ENCODE measurements at regions of chr17 and their contacts with region 1.

Region 1: GRCh38 chr17:72725433-72726068 is 366.9 kb downstream of the SLC39A11 start:
- DNase-seq: no peak
- ATAC-seq: peak in 1 of 2 donors; percentile 30
- H3K4me3 ChIP-seq: no peak overlapping the region
- H3K27ac ChIP-seq: no peak overlapping the region
- H3K4me1 ChIP-seq: no peaks in the 10 kb centered on the region
- H3K27me3 ChIP-seq: no peaks in the 10 kb centered on the region
- CTCF ChIP-seq: peak; percentile 33 to 71 (median 55)
- POLR2A ChIP-seq: no peak

Region 2: GRCh38 chr17:73030501-73030921 is 305.0 kb after region 1 on chr17:
- in situ Hi-C with region 1: no loop called
- intact Hi-C with region 1: no loop called
- DNase-seq: peak; percentile 16 to 22
- ATAC-seq: peak; percentile 49 to 70
- H3K4me3 ChIP-seq: no peak overlapping the region
- H3K27ac ChIP-seq: no peak overlapping the region
- H3K4me1 ChIP-seq: peaks cover 12 to 16% of the 10 kb centered on the region in 2 donors
- H3K27me3 ChIP-seq: no peaks in the 10 kb centered on the region
- CTCF ChIP-seq: no peak
- POLR2A ChIP-seq: no peak

Region 3: DNA sequence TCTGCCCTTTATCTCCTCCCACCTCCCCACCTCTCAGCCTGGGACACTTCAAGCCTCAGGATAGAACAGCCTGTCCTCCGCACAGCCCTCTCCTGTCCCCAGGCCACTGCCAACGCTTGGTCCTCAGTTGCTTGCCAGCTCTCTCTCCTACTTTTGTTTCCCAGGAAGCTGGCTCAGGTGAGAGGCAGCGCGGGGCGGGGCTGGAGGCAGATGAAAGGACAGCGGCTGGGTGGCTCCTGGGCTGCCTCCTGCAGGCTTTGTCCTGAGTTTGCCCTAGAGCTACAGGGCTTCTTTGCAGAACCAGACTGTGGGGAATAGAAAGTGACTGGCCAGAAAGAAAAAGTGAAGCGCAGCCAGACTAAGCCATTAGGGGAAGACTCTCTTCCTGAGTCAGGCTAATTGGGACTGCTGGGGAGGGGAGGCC is 634.4 kb after region 1 on chr17:
- in situ Hi-C with region 1: loop called in 3 of 4 experiments (anchors 25 kb)
- intact Hi-C with region 1: no loop called
- DNase-seq: peak; percentile 81 to 86
- ATAC-seq: peak; percentile 85 to 87
- H3K4me3 ChIP-seq: no peak overlapping the region
- H3K27ac ChIP-seq: peak overlapping the region in 1 of 4 donors; percentile 68
- H3K4me1 ChIP-seq: peaks cover 5 to 27% of the 10 kb centered on the region in 2 donors
- H3K27me3 ChIP-seq: no peaks in the 10 kb centered on the region
- CTCF ChIP-seq: no peak
- POLR2A ChIP-seq: no peak